ENCODE measurements at regions of chr7 and their contacts with region 1.

Region 1: DNA sequence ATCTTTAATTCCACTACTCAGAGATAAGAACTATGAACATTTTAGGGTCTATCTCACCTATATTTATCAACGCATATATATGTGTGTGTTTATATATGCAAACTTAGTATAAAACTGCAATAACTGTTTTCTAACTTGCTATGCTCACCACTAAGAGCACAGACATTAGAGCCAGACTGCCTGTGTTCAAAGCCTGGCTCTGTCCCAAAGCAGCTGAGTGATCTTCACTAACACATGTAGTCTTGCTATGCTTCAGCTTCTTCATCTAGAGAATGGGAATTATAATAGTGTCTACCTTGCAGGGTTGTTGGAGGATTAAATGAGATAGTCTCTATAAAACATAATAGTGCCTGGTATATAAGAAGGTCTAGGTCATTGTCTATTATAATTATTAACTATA is 165.5 kb downstream of the MAGI2 start:
- DNase-seq: no peak
- ATAC-seq: no peak
- H3K4me3 ChIP-seq: no peak overlapping the region
- H3K4me3 Mint-ChIP-seq: no peak overlapping the region
- H3K27ac ChIP-seq: no peak overlapping the region
- H3K27ac Mint-ChIP-seq: no peak overlapping the region
- H3K4me1 ChIP-seq: no peaks in the 10 kb centered on the region
- H3K4me1 Mint-ChIP-seq: no peaks in the 10 kb centered on the region
- H3K27me3 ChIP-seq: no peaks in the 10 kb centered on the region
- H3K27me3 Mint-ChIP-seq: peaks cover 3% of the 10 kb centered on the region
- CTCF ChIP-seq: no peak

Region 2: DNA sequence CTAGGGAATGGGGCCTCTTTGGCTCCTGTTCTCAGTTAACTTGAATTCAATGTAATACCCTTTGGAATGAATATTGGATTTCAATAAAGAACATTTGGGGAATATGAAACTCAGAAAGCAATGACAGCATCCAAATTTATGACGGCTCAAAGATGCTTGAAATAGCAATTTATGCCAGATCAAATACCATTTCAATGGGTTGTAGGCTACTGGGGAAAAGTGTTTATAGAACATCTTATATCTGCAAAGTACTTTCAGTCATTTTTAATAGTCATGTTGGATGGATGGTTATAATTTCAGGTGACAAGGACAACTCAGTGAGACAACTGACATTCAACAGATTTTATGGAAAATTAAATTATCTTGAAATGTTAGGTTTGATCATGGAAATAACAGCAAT is 716.7 kb before region 1 on chr7:
- CTCF ChIA-PET with region 1: no interaction called
- POLR2A ChIA-PET with region 1: no interaction called
- intact Hi-C with region 1: loop called in 1 of 2 experiments (anchors 5 kb)
- DNase-seq: no peak
- ATAC-seq: no peak
- H3K4me3 ChIP-seq: no peak overlapping the region
- H3K4me3 Mint-ChIP-seq: no peak overlapping the region
- H3K27ac ChIP-seq: no peak overlapping the region
- H3K27ac Mint-ChIP-seq: no peak overlapping the region
- H3K4me1 ChIP-seq: no peaks in the 10 kb centered on the region
- H3K4me1 Mint-ChIP-seq: no peaks in the 10 kb centered on the region
- H3K27me3 ChIP-seq: no peaks in the 10 kb centered on the region
- H3K27me3 Mint-ChIP-seq: no peaks in the 10 kb centered on the region
- CTCF ChIP-seq: no peak

Region 3: DNA sequence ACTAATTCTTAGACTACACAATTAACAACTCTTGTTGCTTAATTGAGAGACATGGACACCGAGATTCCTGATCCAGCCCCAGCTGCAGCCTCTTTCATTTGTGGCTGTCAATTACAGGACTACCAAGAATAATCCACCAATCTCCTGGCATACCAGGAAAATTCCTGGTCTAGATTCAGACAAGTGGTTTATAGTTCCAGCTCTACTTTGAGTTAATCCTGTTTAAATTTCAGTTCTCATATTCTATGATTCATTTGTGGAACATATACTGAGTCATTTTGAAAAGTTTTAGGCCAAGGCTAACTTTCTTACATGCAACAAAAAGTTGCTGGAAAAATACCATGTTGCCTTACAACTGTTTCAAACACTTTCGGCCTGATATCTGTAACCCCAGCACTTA is 88.0 kb before region 1 on chr7:
- CTCF ChIA-PET with region 1: no interaction called
- POLR2A ChIA-PET with region 1: no interaction called
- intact Hi-C with region 1: no loop called
- DNase-seq: no peak
- ATAC-seq: no peak
- H3K4me3 ChIP-seq: no peak overlapping the region
- H3K4me3 Mint-ChIP-seq: no peak overlapping the region
- H3K27ac ChIP-seq: no peak overlapping the region
- H3K27ac Mint-ChIP-seq: no peak overlapping the region
- H3K4me1 ChIP-seq: no peaks in the 10 kb centered on the region
- H3K4me1 Mint-ChIP-seq: no peaks in the 10 kb centered on the region
- H3K27me3 ChIP-seq: no peaks in the 10 kb centered on the region
- H3K27me3 Mint-ChIP-seq: no peaks in the 10 kb centered on the region
- CTCF ChIP-seq: no peak